ENCODE measurements at regions of chr18 and their contacts with region 1.

Region 1: DNA sequence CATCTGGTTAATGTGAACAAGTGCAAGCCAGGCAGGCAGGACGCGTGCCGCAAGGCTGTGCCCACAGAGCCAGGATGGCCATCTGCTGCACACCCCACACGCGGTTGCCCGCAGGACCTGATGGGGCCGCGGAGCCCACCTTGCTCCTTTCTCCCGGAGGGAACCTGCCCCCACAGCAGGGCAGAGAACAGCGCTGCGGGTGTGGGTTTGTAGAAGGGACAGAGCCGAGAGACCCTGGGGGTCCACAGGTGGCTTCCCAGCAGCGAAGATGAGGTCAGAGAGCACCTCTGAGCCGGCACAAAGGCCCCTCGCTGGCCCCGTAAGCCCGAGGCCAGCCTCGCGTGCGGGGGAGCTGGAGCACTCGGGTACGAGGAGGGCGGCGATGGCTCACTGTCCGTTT is 460.8 kb upstream of the SALL3 start:
- DNase-seq: no peak
- ATAC-seq: no peak
- H3K4me3 ChIP-seq: no peak overlapping the region
- H3K27ac ChIP-seq: no peak overlapping the region
- H3K4me1 ChIP-seq: no peaks in the 10 kb centered on the region
- H3K27me3 ChIP-seq: no peaks in the 10 kb centered on the region
- CTCF ChIP-seq: no peak

Region 2: GRCh38 chr18:76850112-76850511 is 1668.7 kb before region 1 on chr18:
- CTCF ChIA-PET with region 1: no interaction called
- POLR2A ChIA-PET with region 1: interaction called, 12 read pairs
- in situ Hi-C with region 1: no loop called
- intact Hi-C with region 1: no loop called
- DNase-seq: no peak
- ATAC-seq: no peak
- H3K4me3 ChIP-seq: no peak overlapping the region
- H3K27ac ChIP-seq: no peak overlapping the region
- H3K4me1 ChIP-seq: peaks cover 8% of the 10 kb centered on the region
- H3K27me3 ChIP-seq: no peaks in the 10 kb centered on the region
- CTCF ChIP-seq: no peak

Region 3: GRCh38 chr18:78607221-78607620 is 88.4 kb after region 1 on chr18:
- CTCF ChIA-PET with region 1: no interaction called
- POLR2A ChIA-PET with region 1: interaction called, 10 read pairs
- in situ Hi-C with region 1: no loop called
- intact Hi-C with region 1: no loop called
- DNase-seq: no peak
- ATAC-seq: no peak
- H3K4me3 ChIP-seq: no peak overlapping the region
- H3K27ac ChIP-seq: no peak overlapping the region
- H3K4me1 ChIP-seq: no peaks in the 10 kb centered on the region
- H3K27me3 ChIP-seq: no peaks in the 10 kb centered on the region
- CTCF ChIP-seq: no peak

Measured in Panc1 (cell line).